GM23248 (cell line): ENCODE measurements at regions of chr5 and their contacts with region 1.

Region 1: DNA sequence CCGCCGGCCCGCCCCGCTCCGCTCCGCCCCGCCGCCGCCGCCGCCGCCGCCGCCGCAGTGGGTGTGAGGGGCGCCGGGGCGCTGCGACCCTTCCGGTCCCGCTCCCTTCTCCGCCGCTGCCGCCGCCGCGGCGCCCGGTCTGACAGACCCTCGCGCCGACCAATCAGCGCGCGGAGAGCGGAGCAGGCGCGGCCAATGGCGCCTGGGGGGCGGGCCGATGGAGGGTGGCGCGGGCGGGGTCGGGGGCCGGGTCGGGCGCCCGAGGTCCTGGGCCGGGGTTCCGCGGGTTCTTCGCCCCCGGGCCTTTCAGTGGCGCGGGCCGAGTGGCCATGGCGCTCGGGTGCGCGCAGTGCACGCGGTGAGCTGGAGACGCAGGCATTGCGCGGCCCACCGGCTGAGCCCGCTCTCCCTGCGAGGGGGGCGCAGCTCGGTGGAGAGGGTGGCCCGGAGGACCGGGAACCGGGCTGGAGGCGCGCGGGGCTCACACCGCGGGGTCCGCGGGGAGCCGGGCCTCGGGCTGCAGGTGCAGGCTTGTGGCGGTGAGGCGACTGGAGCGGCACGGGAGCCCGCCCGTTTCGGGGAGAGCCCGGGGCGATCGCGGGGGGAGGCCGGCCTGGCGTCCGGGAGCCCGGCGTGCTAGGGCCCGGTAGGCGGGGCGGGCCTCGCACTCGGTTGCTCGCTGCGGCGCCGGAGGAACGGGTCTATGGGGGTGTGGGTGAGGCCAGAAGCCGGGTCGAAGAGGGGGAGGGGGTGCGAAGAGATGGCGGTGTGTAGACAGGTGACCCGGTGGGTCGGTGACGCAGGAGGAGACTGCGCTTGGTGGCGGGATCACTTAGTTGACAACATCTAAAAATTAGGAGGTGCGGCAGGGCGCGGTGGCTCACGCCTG is at the start of gene MAPK9:
- DNase-seq: peak; percentile 94
- H3K4me3 ChIP-seq: peak within 1 kb of the TSS; percentile 96
- H3K27ac ChIP-seq: peak within 1 kb of the TSS; percentile 31; the same call in 1 of the 2 replicates
- H3K4me1 ChIP-seq: peaks cover 9% of the 10 kb centered on the region
- H3K27me3 ChIP-seq: no peaks in the 10 kb centered on the region
- total RNA-seq, gene MAPK9: 23.0 and 23.7 TPM in 2 replicates

Region 2: DNA sequence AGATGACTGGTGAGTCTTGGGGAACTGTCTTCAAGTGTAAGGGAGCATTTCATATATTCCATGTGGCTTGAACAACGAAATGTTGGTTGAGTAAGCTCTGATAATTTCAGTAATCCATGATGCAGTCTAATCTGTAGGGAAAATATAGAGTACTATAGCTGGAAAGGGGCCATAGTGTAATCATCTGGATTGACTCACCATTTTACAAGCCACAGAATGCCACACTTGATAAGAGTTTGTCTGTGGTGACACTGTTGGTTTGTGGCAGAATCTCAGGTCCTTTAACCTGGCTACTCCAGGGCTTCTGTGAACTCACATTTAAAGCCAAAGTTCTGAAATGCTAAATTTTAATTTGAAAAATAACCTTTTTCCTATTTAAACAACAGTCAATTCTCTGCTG is 575.9 kb before region 1 on chr5:
- in situ Hi-C with region 1: no loop called
- DNase-seq: peak; percentile 25
- H3K4me3 ChIP-seq: no peak overlapping the region
- H3K27ac ChIP-seq: peak overlapping the region; percentile 14; the same call in 1 of the 2 replicates
- H3K4me1 ChIP-seq: no peaks in the 10 kb centered on the region
- H3K27me3 ChIP-seq: no peaks in the 10 kb centered on the region

Region 3: DNA sequence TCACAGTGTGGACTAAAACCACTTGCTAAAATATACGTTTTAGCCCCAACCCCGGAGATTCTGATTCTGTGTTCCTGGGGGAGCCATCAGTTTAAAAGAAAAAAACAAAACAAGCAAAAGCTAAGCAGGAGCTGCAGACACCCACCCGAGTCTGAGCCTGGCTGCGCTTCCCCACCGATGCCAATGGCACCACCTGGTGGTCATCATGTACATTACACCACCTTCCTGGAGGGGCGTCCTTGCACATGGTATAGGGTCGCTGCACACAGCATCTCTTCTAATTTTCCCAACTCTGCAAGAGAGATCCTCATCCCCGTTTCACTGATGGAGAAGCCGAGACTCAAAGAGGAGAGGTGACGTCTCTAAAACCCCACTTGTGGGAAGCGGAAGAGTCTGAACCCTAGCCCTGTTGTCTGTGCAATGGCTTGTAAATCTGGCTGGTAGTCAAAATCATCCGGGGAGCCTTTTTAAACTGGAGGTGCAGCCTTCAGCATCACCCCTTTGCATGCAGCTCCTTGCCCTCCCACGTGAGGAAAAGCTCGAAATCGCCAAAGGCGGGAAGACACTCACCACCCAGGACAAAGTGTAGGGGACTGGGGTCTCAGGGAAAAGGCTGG is 178.9 kb after region 1 on chr5:
- in situ Hi-C with region 1: loop called (anchors 5 kb)
- DNase-seq: peak; percentile 68
- H3K4me3 ChIP-seq: no peak overlapping the region
- H3K27ac ChIP-seq: no peak overlapping the region
- H3K4me1 ChIP-seq: 0 out of 2 replicates have a peak, but pooled peaks cover 3% of the 10 kb centered on the region
- H3K27me3 ChIP-seq: no peaks in the 10 kb centered on the region; the same call in 1 of the 2 replicates